HCT116 (cell line): ENCODE measurements at regions of chr11 and their contacts with region 1.

Region 1: GRCh38 chr11:119229741-119230140 is 23.6 kb downstream of the CBL start:
- DNase-seq: no peak
- ATAC-seq: no peak
- H3K4me3 ChIP-seq: no peak overlapping the region
- H3K27ac ChIP-seq: no peak overlapping the region
- H3K4me1 ChIP-seq: peaks cover 0 to 3% of the 10 kb centered on the region in 2 experiments; a peak in 1 of 4 replicates
- H3K27me3 ChIP-seq: no peaks in the 10 kb centered on the region
- CTCF ChIP-seq: no peak
- POLR2A ChIP-seq: no peak
- RAD21 ChIP-seq: no peak

Region 2: DNA sequence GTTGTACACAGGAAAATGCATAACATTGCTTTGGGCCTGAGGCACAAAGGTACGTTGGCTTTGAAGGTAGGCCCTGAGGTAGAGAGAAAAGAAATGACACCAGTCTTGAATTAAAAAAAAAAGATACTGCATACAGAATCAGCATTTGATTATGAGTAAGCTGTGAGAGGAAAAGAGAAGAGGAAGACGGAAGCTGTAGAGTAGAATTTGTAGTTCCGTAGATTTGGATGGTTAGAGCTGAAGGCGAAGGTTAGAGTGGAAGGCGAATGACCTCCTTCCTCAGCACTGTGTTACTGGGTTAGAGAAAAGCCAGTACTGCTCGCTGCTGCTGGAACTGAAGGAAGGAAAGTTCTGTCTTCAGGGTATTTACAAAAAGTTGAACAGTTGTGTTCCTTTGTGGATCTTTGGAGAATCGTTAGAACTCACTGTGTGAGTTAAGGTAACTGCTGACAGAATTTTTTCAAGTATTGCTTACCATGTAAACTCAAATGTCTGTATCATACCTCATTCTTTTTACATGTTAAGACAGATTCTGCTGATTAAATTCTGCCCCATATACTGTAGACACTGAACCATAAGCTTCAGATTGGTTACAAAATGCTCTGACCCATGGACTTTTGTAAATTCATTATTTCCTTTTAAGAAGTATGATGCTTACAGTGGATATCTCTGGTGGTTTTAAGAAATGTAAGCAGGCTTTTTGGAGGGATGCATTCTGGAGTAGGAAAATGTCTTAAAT is 36.9 kb after region 1 on chr11:
- CTCF ChIA-PET with region 1: no interaction called
- POLR2A ChIA-PET with region 1: no interaction called
- RAD21 ChIA-PET with region 1: no interaction called
- intact Hi-C with region 1: loop called (anchors 5 kb)
- DNase-seq: no peak
- ATAC-seq: no peak
- H3K4me3 ChIP-seq: no peak overlapping the region
- H3K27ac ChIP-seq: no peak overlapping the region
- H3K4me1 ChIP-seq: no peaks in the 10 kb centered on the region
- H3K27me3 ChIP-seq: no peaks in the 10 kb centered on the region
- CTCF ChIP-seq: no peak
- POLR2A ChIP-seq: no peak
- RAD21 ChIP-seq: no peak